ENCODE measurements at regions of chr7 and their contacts with region 1.

Region 1: GRCh38 chr7:25894902-25895791 is 256.9 kb upstream of the NFE2L3 start:
- DNase-seq: peak; percentile 87 to 95 (median 89)
- H3K4me3 ChIP-seq: peak overlapping the region in 1 of 3 experiments; percentile 48
- H3K4me3 Mint-ChIP-seq: peak overlapping the region; percentile 50 to 83
- H3K27ac ChIP-seq: no peak overlapping the region
- H3K27ac Mint-ChIP-seq: peak overlapping the region in 6 of 7 donors; percentile 75 to 89 (median 80)
- H3K4me1 ChIP-seq: peaks cover 19 to 29% of the 10 kb centered on the region in 2 donors
- H3K4me1 Mint-ChIP-seq: peaks cover 36% of the 10 kb centered on the region
- H3K27me3 ChIP-seq: peaks cover 80 to 83% of the 10 kb centered on the region in 2 donors
- H3K27me3 Mint-ChIP-seq: peaks cover 74 to 88% (median 78%) of the 10 kb centered on the region in 3 donors
- CTCF ChIP-seq: peak; percentile 88

Region 2: GRCh38 chr7:26061688-26062150 is 166.6 kb after region 1 on chr7:
- intact Hi-C with region 1: loop called (anchors 5 to 10 kb)
- DNase-seq: peak; percentile 35 to 57 (median 54)
- H3K4me3 ChIP-seq: no peak overlapping the region
- H3K4me3 Mint-ChIP-seq: peak overlapping the region in 1 of 2 donors; percentile 62
- H3K27ac ChIP-seq: no peak overlapping the region
- H3K27ac Mint-ChIP-seq: no peak overlapping the region
- H3K4me1 ChIP-seq: no peaks in the 10 kb centered on the region
- H3K4me1 Mint-ChIP-seq: no peaks in the 10 kb centered on the region
- H3K27me3 ChIP-seq: peaks cover 43 to 44% of the 10 kb centered on the region in 2 donors
- H3K27me3 Mint-ChIP-seq: peaks cover 28 to 60% (median 38%) of the 10 kb centered on the region in 3 donors
- CTCF ChIP-seq: peak; percentile 94

Measured in CD14-positive monocyte (primary cell).